ENCODE measurements at regions of chr6 and their contacts with region 1.

Region 1: DNA sequence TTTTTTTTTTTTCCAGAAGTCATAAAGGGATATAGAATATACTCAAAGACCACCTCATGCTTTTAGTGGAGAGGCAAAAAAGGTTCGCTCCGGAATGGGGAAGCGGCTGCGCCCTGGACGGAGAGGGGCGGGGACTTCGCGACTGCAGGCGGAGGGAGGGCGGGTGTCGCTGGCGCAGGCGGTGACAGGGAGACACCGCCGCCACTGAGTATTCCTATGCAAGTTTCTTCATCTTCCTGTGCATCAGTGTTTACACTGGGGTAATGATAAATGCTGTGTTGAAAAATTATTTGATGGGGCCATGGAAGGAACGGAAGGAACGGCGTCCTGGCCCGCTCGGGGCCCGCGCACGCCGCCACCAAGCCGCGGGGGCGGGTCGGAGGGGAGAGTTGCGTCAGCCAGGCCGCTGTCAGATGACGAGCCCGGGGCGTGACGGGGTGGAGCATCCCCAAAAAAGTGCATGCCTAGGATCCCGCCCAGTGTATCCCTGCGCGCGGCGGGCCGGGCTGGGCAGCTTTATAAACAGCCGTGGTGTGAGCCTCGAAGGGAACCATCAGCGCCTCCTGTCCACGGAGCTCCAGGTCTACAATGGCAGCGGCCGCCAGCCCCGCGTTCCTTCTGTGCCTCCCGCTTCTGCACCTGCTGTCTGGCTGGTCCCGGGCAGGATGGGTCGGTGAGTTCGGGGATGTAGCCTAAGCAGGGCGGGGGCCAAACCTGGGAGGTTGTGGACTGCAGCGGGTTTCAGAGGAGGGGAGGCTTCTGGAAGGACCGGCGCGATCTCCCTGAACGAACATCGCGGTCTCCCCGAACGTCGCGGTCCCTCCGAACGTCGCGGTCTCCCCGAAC is at the start of gene ULBP1:
- DNase-seq: peak; percentile 86
- ATAC-seq: peak; percentile 77
- H3K4me3 ChIP-seq: peak within 1 kb of the TSS; percentile 31 to 66 (median 53)
- H3K4me3 Mint-ChIP-seq: peak within 1 kb of the TSS; percentile 95
- H3K27ac ChIP-seq: no peak within 1 kb of the TSS
- H3K27ac Mint-ChIP-seq: peak within 1 kb of the TSS; percentile 67
- H3K4me1 ChIP-seq: peaks cover 28 to 30% of the 10 kb centered on the region in 2 donors
- H3K4me1 Mint-ChIP-seq: peaks cover 29% of the 10 kb centered on the region
- H3K27me3 ChIP-seq: peaks cover 0 to 79% (median 35%) of the 10 kb centered on the region in 4 experiments
- H3K27me3 Mint-ChIP-seq: peaks cover 86% of the 10 kb centered on the region
- CTCF ChIP-seq: no peak
- total RNA-seq, gene ULBP1: 0.12 and 0.19 TPM in 2 replicates

Region 2: DNA sequence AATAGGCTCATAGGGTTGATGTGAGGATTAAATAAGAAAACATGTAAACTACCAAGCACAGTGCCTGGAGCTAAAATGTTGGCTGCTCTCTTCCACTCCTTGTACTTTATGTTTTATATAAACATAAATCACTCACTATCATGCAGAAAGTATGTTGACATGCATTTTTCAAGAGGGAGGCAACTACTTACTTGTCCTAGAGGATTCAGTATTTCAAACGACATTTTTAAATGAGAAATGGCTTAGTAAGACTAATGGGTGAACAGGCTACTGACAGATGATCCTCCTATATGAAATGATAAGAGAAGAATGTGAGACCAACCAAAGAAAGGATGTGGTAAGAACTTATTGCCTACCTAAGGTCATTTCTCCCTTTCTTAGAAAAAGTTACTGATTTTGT is 266.8 kb before region 1 on chr6:
- CTCF ChIA-PET with region 1: no interaction called
- POLR2A ChIA-PET with region 1: no interaction called
- intact Hi-C with region 1: no loop called
- DNase-seq: no peak
- ATAC-seq: no peak
- H3K4me3 ChIP-seq: no peak overlapping the region
- H3K4me3 Mint-ChIP-seq: no peak overlapping the region
- H3K27ac ChIP-seq: no peak overlapping the region
- H3K27ac Mint-ChIP-seq: no peak overlapping the region
- H3K4me1 ChIP-seq: no peaks in the 10 kb centered on the region
- H3K4me1 Mint-ChIP-seq: peaks cover 10% of the 10 kb centered on the region
- H3K27me3 ChIP-seq: no peaks in the 10 kb centered on the region
- H3K27me3 Mint-ChIP-seq: no peaks in the 10 kb centered on the region
- CTCF ChIP-seq: no peak

Region 3: DNA sequence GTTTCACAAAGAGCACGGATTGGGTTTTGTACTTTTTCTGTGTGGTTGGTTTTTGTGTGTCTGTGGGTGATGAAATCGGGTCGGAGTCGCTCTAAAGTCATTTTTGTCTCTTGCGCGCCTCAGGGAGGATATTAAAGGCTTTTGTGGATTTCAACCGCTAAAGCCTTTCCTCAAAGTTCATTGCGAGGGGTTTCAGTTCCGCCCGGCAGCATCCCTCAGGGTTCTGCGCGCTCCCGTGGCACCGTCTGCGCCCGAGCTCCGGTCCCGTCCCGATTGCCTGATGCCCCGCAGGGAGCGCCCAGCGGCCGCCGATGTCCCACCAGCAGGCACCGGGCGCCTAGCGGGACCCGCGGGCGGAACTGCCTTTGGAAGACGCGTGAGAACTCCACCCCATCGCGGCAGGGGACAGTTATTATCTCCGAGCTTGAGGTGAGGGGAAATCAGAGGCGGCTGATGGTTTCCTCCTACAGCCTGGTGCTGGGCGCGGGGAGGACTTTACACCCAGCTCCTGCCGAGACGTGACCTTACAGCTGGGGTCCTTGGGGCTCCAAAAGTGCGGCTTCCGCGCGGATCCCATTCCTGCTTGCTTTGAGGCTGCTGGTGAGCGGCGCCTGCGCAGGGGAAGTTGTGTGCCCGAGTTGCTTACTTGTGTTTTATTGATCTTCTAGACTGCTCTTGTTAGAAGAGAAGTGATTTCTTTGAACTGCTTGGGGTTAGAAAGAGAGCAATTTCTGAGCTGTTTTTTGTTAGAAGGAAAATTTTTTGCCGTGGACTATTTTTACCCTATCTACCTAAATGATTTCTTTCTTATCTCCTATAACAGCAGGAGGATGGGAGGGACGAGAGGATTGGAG is 27.2 kb after region 1 on chr6:
- CTCF ChIA-PET with region 1: interaction called, 4 read pairs
- POLR2A ChIA-PET with region 1: no interaction called
- intact Hi-C with region 1: loop called (anchors 1 kb)
- DNase-seq: peak; percentile 76
- ATAC-seq: peak; percentile 60
- H3K4me3 ChIP-seq: peak overlapping the region; percentile 6 to 68 (median 55)
- H3K4me3 Mint-ChIP-seq: peak overlapping the region; percentile 90
- H3K27ac ChIP-seq: no peak overlapping the region
- H3K27ac Mint-ChIP-seq: peak overlapping the region; percentile 46
- H3K4me1 ChIP-seq: peaks cover 29 to 38% of the 10 kb centered on the region in 2 donors
- H3K4me1 Mint-ChIP-seq: peaks cover 31% of the 10 kb centered on the region
- H3K27me3 ChIP-seq: peaks cover 0 to 84% (median 63%) of the 10 kb centered on the region in 4 experiments
- H3K27me3 Mint-ChIP-seq: peaks cover 73% of the 10 kb centered on the region
- CTCF ChIP-seq: no peak

Region 4: GRCh38 chr6:149999636-150000035 is 36.0 kb after region 1 on chr6:
- CTCF ChIA-PET with region 1: no interaction called
- POLR2A ChIA-PET with region 1: interaction called, 11 read pairs
- intact Hi-C with region 1: loop called (anchors 1 kb)
- DNase-seq: no peak
- ATAC-seq: no peak
- H3K4me3 ChIP-seq: no peak overlapping the region
- H3K4me3 Mint-ChIP-seq: no peak overlapping the region
- H3K27ac ChIP-seq: no peak overlapping the region
- H3K27ac Mint-ChIP-seq: no peak overlapping the region
- H3K4me1 ChIP-seq: peaks cover 8 to 14% of the 10 kb centered on the region in 2 donors
- H3K4me1 Mint-ChIP-seq: peaks cover 18% of the 10 kb centered on the region
- H3K27me3 ChIP-seq: peaks cover 0 to 20% (median 7%) of the 10 kb centered on the region in 4 experiments
- H3K27me3 Mint-ChIP-seq: peaks cover 24% of the 10 kb centered on the region
- CTCF ChIP-seq: no peak

Measured in B cell (primary cell).